A673 (cell line): ENCODE measurements at regions of chr2 and their contacts with region 1.

Region 1: DNA sequence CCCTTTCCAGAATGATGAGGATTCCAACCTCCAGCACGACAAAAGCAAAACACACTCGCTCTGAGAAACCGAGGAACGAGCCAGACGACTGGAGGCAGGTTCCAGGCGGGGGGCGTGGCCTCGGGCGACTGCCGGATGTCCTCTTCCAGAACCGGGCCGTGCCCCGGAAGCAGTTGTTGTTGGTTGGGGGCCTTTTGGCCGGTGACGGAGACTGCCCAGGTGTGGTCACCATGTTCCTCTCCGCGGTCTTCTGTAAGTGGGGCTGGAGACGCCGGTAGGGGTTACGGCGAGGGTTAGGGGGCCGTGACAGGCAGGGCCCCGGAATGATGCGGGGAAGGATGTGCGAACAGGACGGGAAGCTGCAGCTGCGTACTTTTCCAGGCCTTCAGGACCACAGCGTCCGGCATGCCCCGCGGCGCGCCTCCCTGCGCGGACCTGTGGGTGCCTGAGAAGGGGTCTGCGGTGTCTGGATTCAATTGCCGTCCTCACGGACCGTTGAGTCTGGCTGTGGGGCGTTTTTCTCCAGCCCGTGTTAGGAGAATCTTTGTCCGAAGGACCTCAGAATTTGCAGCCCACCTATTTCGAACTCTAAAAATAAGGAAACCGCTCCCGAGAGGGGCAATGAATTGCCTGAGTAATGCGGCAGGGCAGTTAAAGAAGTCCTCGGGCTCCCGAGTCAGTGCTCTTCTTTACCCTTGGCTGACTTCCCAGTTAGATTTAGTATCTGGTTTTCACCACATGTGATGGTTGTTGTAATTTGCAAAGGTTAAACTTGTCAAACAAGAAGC is at the start of gene MRPL33:
- DNase-seq: peak; percentile 96
- H3K4me3 ChIP-seq: peak within 1 kb of the TSS; percentile 62
- H3K27ac ChIP-seq: peak within 1 kb of the TSS; percentile 73
- H3K4me1 ChIP-seq: peaks cover 19% of the 10 kb centered on the region
- H3K27me3 ChIP-seq: no peaks in the 10 kb centered on the region
- CTCF ChIP-seq: no peak
- total RNA-seq, gene MRPL33: 55.4 and 68.1 TPM in 2 replicates

Region 2: DNA sequence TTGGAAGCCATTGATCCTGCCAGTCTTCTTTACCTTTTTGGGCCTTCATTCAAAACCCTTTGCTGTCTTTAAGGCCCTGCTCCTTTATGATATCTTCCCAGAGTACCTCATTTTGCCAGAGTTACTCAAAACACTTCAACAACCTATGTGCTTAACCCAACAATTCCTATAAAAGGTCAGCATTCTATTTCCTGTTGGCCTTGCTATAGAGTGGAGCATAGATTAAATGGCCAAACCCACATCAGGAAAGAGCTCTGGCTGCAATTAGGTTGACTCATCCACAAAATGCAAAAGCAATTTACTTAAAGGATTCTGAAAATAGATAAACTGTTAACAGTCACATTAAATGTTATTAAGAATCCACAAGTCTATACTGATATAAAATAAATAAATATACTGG is 21.0 kb after region 1 on chr2:
- CTCF ChIA-PET with region 1: no interaction called
- POLR2A ChIA-PET with region 1: no interaction called
- intact Hi-C with region 1: no loop called
- DNase-seq: peak; percentile 24
- H3K4me3 ChIP-seq: no peak overlapping the region
- H3K27ac ChIP-seq: no peak overlapping the region
- H3K4me1 ChIP-seq: no peaks in the 10 kb centered on the region
- H3K27me3 ChIP-seq: no peaks in the 10 kb centered on the region
- CTCF ChIP-seq: no peak

Region 3: DNA sequence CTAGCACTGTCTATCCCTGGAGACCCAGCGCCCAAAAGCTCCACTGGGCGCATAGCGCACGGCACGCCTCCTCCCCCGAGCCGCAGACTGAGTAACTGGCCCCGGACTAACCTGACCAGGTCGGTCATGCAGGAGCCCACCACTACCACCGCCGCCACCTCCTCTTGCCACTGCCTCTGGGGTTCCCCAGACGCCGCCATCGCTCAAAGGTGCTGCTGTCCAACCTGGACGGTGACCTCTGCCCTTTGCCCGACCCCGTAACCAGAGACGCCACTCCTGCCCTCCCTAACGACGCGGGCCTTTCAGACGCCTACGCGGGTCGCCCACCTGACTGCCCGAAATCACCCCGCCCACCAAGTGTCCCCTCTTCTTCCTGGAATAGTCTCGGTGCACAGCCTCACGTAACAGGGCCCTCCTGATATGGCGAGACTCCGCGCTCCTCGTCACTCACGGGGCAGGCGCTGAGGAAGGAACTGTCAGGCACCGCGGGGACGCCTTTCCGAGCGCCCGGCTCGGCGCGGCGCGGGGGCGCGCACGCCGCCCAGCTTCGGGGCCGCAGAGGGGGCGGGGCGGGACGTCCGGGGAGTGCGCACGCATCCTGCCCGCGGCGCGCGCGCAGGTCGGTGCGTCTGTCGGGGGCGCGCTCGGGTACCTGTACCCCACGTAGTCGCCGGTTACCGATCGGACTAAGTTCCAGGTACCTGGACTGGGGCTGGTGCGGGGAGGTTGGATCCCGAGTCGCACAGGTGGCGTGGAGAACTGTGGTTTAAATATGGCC is 118.6 kb after region 1 on chr2 and contains the starts of genes BABAM2 and RBKS:
- CTCF ChIA-PET with region 1: interaction called, 3 read pairs
- POLR2A ChIA-PET with region 1: no interaction called
- intact Hi-C with region 1: loop called (anchors 10 kb)
- DNase-seq: peak; percentile 93
- H3K4me3 ChIP-seq: peak within 1 kb of the TSS; percentile 63
- H3K27ac ChIP-seq: peak within 1 kb of the TSS; percentile 75
- H3K4me1 ChIP-seq: peaks cover 8% of the 10 kb centered on the region
- H3K27me3 ChIP-seq: no peaks in the 10 kb centered on the region
- CTCF ChIP-seq: no peak
- total RNA-seq, gene BABAM2: 21.5 and 21.8 TPM in 2 replicates
- total RNA-seq, gene RBKS: 0.54 and 0.66 TPM in 2 replicates